ENCODE measurements at regions of chr7 and their contacts with region 1.

Region 1: GRCh38 chr7:4610768-4611467 is 71.2 kb upstream of the FOXK1 start:
- DNase-seq: no peak
- H3K4me3 ChIP-seq: no peak overlapping the region
- H3K27me3 ChIP-seq: no peaks in the 10 kb centered on the region
- CTCF ChIP-seq: peak; percentile 77

Region 2: GRCh38 chr7:3821488-3821887 is 789.4 kb before region 1 on chr7:
- CTCF ChIA-PET with region 1: no interaction called
- POLR2A ChIA-PET with region 1: no interaction called
- DNase-seq: no peak
- H3K4me3 ChIP-seq: no peak overlapping the region
- H3K27me3 ChIP-seq: no peaks in the 10 kb centered on the region
- CTCF ChIP-seq: no peak

Region 3: GRCh38 chr7:4361757-4362156 is 249.2 kb before region 1 on chr7:
- CTCF ChIA-PET with region 1: no interaction called
- POLR2A ChIA-PET with region 1: no interaction called
- DNase-seq: no peak
- H3K4me3 ChIP-seq: no peak overlapping the region
- H3K27me3 ChIP-seq: no peaks in the 10 kb centered on the region
- CTCF ChIP-seq: no peak

Region 4: DNA sequence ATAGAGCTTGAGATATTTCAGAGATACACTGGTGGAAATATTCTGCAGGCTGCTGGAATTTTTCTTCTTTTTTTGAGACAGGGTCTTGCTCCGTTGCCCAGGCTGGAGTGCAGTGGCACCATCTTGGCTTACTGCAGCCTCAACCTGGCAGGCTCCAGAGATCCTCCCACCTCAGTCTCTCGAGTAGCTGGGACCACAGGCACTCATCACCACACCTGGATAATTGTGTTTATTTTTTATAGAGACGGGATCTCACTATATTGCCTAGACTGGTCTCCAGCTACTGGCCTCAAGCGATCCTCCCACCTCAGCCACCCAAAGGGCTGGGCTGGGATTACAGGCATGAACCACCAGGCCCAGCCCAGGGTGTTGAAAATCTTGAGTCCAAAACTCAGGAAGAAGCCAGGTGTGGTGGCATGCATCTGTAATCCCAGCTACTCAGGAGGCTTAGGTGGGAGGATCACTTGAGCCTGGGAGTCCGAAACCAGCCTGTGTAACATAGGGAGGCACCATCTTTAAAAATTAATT is 15.5 kb after region 1 on chr7:
- CTCF ChIA-PET with region 1: interaction called, 57 read pairs
- POLR2A ChIA-PET with region 1: no interaction called
- DNase-seq: no peak
- H3K4me3 ChIP-seq: no peak overlapping the region
- H3K27me3 ChIP-seq: peaks cover 3% of the 10 kb centered on the region; the same call in 1 of the 2 replicates
- CTCF ChIP-seq: no peak

Region 5: DNA sequence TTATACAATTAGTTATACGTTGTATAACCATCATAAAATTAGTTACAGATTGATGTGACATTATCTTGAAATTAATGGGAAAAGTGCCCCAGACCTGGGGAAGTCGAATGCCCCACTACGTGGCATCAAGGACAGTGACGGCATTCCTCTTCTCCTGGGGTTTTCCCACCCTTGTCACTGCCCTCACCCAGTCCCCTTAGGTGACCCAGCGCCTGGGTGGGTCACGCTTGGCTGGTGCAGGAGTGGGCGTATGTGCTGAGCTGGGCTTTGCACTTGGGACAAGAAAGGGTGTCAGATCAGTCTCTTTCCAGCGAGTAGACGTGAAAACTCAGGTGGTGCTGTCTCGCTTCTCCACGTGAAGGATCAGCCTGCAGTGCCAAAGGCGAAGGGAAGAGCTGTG is 78.8 kb after region 1 on chr7:
- CTCF ChIA-PET with region 1: no interaction called
- POLR2A ChIA-PET with region 1: no interaction called
- DNase-seq: no peak
- H3K4me3 ChIP-seq: no peak overlapping the region
- H3K27me3 ChIP-seq: no peaks in the 10 kb centered on the region
- CTCF ChIP-seq: no peak

Measured in BJ (cell line).